ENCODE measurements at regions of chr1 and their contacts with region 1.

Region 1: GRCh38 chr1:102315096-102315495 is 318.4 kb upstream of the OLFM3 start:
- DNase-seq: no peak
- H3K4me3 ChIP-seq: no peak overlapping the region
- H3K27ac ChIP-seq: no peak overlapping the region
- H3K4me1 ChIP-seq: no peaks in the 10 kb centered on the region
- H3K27me3 ChIP-seq: no peaks in the 10 kb centered on the region
- CTCF ChIP-seq: no peak
- EP300 ChIP-seq: no peak
- POLR2A ChIP-seq: no peak

Region 2: DNA sequence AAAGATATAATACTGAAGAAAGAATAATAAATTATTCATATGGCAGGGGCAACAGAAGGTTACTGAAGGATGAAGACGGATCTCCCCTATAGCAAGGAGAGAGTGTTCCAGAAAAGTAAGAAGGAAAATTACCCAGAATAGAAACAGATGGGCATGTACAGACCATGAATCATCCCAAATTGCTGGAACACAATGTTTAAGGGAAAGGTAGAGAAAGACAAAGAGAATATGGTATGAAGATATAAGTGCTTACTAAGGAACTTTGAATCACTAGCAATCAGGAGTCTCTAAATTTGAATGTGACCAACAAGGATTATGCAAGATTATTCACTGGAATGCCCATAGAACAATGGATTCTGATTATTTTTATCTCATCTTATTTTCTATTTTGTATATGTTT is 417.8 kb after region 1 on chr1:
- in situ Hi-C with region 1: no loop called
- intact Hi-C with region 1: loop called (anchors 5 kb)
- DNase-seq: no peak
- H3K4me3 ChIP-seq: no peak overlapping the region
- H3K27ac ChIP-seq: no peak overlapping the region
- H3K4me1 ChIP-seq: no peaks in the 10 kb centered on the region
- H3K27me3 ChIP-seq: no peaks in the 10 kb centered on the region
- CTCF ChIP-seq: no peak
- EP300 ChIP-seq: no peak
- POLR2A ChIP-seq: no peak

Measured in transverse colon (tissue), 4 donors.